Activated CD4-positive, alpha-beta memory T cell treated with anti-CD3 and anti-CD28 coated beads for 36 hours (primary cell): ENCODE measurements at regions of chr6 and their contacts with region 1.

Region 1: DNA sequence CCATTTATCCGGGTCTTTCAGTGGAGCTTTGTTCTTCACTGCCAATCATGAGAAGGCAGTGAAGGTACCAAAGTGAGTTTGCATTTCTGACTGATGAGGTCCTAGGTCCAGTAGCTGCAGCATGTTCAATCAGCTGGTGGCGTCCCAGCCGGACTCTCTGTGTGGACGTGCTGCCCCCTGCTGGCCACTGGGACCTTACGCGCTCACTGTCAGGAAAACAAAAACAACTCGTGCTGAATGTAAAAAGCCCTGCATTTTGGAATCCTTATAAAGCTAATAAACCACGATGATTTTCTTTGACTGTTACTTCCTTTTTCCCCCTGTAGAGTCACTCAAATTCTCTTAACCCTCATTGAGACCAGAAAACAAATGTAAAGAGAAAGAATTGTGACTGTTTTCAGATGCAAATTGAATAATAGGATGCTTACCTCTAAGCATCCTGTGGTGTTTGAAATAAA is 4.9 kb upstream of the CD24 start:
- DNase-seq: peak; percentile 86
- H3K4me3 Mint-ChIP-seq: no peak overlapping the region
- H3K27ac Mint-ChIP-seq: no peak overlapping the region
- H3K4me1 Mint-ChIP-seq: peaks cover 7% of the 10 kb centered on the region
- H3K27me3 Mint-ChIP-seq: peaks cover 29% of the 10 kb centered on the region

Region 2: DNA sequence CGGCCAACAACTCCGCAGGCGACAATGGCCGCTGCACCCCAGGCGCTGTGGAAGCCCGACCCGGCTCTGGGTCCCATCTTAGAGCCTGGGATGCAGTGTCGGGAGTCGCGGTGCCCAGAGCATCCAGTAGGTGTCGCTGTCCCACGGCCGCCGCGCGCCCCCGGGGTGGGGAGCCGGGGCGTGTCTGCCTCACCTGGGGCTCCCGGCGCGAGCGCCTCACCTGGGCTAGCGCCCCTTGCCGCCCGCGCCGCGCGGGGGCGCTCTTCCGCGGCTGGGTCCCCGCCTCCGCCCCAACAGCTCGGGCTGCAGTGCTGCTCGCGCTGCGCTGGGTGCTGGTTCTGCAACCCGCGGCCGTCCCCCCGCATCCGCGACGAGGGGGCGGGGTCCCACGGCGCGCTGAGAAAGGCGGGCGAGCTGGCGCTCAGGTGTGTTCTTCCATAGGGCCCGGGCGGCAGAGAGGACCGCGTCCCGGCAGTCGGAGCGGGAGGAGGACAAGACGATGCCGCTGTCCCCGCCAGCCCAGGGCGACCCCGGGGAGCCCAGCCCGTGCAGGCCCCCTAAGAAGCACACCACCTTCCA is 619.0 kb before region 1 on chr6 and contains the start of gene CRYBG1:
- CTCF ChIA-PET with region 1: interaction called, 11 read pairs
- POLR2A ChIA-PET with region 1: no interaction called
- intact Hi-C with region 1: no loop called
- DNase-seq: peak; percentile 83
- H3K4me3 Mint-ChIP-seq: peak within 1 kb of the TSS; percentile 68
- H3K27ac Mint-ChIP-seq: no peak within 1 kb of the TSS
- H3K4me1 Mint-ChIP-seq: peaks cover 9% of the 10 kb centered on the region
- H3K27me3 Mint-ChIP-seq: peaks cover 37% of the 10 kb centered on the region
- total RNA-seq, gene CRYBG1: 38.4 to 39.3 TPM

Region 3: DNA sequence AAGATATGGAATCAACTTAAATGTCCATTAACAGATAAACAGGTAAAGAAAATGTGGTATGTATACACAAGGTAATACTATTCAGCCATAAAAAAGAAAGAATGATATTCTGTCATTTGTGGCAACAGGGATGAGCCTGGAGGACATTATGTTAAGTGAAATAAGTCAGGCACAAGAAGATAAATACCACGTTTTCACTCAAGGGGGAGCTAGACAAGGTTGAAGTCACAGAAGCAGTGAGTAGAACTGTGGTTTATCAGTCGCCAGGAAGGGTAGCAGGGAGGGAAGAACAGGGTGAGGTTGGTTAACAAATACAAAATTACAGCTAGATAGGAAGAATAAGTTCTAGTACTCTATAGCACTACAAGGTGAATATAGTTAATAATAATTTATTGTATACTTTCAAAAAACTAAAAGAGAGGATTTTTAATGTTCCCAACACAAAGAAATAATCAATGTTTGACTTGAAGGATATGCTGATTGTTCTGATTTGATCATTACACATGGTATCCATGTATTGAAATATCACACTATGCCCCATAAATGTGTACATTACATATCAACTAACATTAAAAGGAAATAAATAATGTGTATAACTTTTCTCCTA is 371.3 kb before region 1 on chr6:
- CTCF ChIA-PET with region 1: interaction called, 25 read pairs
- POLR2A ChIA-PET with region 1: no interaction called
- intact Hi-C with region 1: loop called (anchors 1 kb)
- DNase-seq: peak; percentile 14
- H3K4me3 Mint-ChIP-seq: no peak overlapping the region
- H3K27ac Mint-ChIP-seq: no peak overlapping the region
- H3K4me1 Mint-ChIP-seq: peaks cover 8% of the 10 kb centered on the region
- H3K27me3 Mint-ChIP-seq: no peaks in the 10 kb centered on the region

Region 4: GRCh38 chr6:106997390-106998158 is 18.1 kb after region 1 on chr6:
- CTCF ChIA-PET with region 1: interaction called, 12 read pairs
- POLR2A ChIA-PET with region 1: no interaction called
- intact Hi-C with region 1: no loop called
- DNase-seq: peak; percentile 76
- H3K4me3 Mint-ChIP-seq: no peak overlapping the region
- H3K27ac Mint-ChIP-seq: no peak overlapping the region
- H3K4me1 Mint-ChIP-seq: peaks cover 5% of the 10 kb centered on the region
- H3K27me3 Mint-ChIP-seq: no peaks in the 10 kb centered on the region